Heart left ventricle (tissue), 16 donors: ENCODE measurements at regions of chr2 and their contacts with region 1.

Region 1: GRCh38 chr2:172404824-172405223 is 22.6 kb upstream of the ITGA6 start:
- DNase-seq: no peak
- ATAC-seq: peak in 2 of 4 donors; percentile 16 to 41
- H3K4me3 ChIP-seq: no peak overlapping the region
- H3K27ac ChIP-seq: peak overlapping the region in 9 of 12 donors; percentile 5 to 73 (median 22)
- H3K4me1 ChIP-seq: peaks cover 0 to 45% (median 17%) of the 10 kb centered on the region in 12 donors
- H3K27me3 ChIP-seq: no peaks in the 10 kb centered on the region
- CTCF ChIP-seq: no peak
- POLR2A ChIP-seq: no peak

Region 2: DNA sequence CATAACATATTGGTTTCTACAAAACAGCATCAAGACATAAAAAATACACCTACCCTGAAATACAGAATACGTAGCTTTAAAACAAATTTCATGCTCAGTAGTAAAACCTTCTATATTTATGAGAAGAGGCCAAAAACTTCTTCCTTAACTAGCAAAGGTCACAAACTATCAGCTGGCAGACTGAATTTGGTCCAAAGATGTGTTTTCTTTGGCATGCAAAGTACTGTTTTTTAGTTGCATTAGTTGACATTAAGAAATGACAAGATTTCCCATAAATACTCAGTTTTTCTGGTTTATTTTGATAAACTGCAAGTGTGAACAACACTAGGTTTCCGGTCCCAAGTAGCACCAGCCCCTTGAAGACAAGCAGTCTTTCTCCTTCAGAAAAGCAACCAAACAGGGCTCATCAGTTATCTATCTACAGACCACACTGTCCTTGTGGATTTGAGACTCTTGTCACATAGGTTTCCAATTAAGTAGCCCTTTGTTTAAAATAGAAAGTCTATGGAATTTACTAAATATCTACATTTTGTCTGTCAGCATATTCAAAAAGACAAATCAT is 546.3 kb before region 1 on chr2:
- intact Hi-C with region 1: no loop called
- DNase-seq: no peak
- ATAC-seq: no peak
- H3K4me3 ChIP-seq: no peak overlapping the region
- H3K27ac ChIP-seq: peak overlapping the region in 2 of 12 donors; percentile 17 to 20
- H3K4me1 ChIP-seq: peaks cover 0 to 30% (median 12%) of the 10 kb centered on the region in 12 donors
- H3K27me3 ChIP-seq: no peaks in the 10 kb centered on the region
- CTCF ChIP-seq: no peak
- POLR2A ChIP-seq: no peak

Region 3: DNA sequence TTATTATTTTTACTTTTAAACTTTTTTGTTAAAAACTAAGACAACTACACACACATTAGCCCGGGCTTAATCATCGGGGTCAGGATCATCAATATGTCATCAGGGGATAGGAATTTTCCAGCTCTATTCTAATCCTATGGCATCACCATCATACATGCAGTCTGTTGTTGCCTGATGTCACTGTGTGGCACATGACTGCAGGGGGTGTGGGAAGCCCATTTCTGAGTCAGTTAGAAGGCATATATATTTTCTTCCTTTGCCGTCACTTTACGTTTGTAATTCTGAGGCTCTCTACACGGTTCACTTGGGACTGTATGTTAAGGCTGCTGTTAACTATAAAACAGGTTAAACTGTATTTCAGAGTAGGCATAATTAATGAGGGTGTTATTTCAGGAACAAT is 121.9 kb before region 1 on chr2:
- intact Hi-C with region 1: no loop called
- DNase-seq: no peak
- ATAC-seq: no peak
- H3K4me3 ChIP-seq: no peak overlapping the region
- H3K27ac ChIP-seq: no peak overlapping the region
- H3K4me1 ChIP-seq: peaks cover 0 to 80% (median 30%) of the 10 kb centered on the region in 12 donors
- H3K27me3 ChIP-seq: no peaks in the 10 kb centered on the region
- CTCF ChIP-seq: no peak
- POLR2A ChIP-seq: no peak

Region 4: GRCh38 chr2:172339371-172340010 is 65.3 kb before region 1 on chr2:
- intact Hi-C with region 1: loop called in 2 of 10 experiments (anchors 5 kb)
- DNase-seq: no peak
- ATAC-seq: peak in 2 of 4 donors; percentile 22 to 24
- H3K4me3 ChIP-seq: no peak overlapping the region
- H3K27ac ChIP-seq: peak overlapping the region in 7 of 12 donors; percentile 14 to 58 (median 35)
- H3K4me1 ChIP-seq: peaks cover 0 to 31% (median 18%) of the 10 kb centered on the region in 12 donors
- H3K27me3 ChIP-seq: no peaks in the 10 kb centered on the region
- CTCF ChIP-seq: peak in 2 of 12 donors; percentile 6 to 29
- POLR2A ChIP-seq: no peak

Region 5: GRCh38 chr2:172496160-172496608 is 91.4 kb after region 1 on chr2:
- intact Hi-C with region 1: no loop called
- DNase-seq: no peak
- ATAC-seq: no peak
- H3K4me3 ChIP-seq: no peak overlapping the region
- H3K27ac ChIP-seq: peak overlapping the region in 1 of 12 donors; percentile 33
- H3K4me1 ChIP-seq: peaks cover 0 to 17% (median 0%) of the 10 kb centered on the region in 12 donors
- H3K27me3 ChIP-seq: no peaks in the 10 kb centered on the region
- CTCF ChIP-seq: no peak
- POLR2A ChIP-seq: no peak